ENCODE measurements at regions of chr6 and their contacts with region 1.

Region 1: DNA sequence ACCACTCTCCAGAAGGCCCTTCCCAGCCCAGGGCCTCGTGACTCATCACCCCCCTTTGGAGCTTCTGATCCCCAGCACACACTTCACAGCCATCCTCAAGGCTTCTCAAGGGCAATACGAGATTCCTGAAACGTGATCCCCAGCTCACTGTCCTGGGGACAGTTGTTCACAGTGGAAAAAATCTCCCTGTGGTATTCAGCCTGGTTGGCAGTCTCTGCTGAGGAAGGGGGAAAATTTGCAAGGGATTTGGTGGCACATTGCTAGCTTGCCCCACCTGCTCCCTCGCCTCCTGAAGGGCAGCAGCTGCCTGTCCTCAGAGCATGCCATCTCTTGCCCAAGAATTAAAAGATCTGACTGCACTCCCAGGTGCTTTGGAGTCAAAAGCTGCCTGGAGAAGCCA is 20.7 kb upstream of the PKHD1 start:
- DNase-seq: peak; percentile 25 to 74
- ATAC-seq: peak; percentile 82 to 90 (median 88)
- H3K4me3 ChIP-seq: peak overlapping the region; percentile 28
- H3K27ac ChIP-seq: peak overlapping the region; percentile 92
- H3K4me1 ChIP-seq: peaks cover 14% of the 10 kb centered on the region
- H3K27me3 ChIP-seq: no peaks in the 10 kb centered on the region
- CTCF ChIP-seq: no peak

Region 2: DNA sequence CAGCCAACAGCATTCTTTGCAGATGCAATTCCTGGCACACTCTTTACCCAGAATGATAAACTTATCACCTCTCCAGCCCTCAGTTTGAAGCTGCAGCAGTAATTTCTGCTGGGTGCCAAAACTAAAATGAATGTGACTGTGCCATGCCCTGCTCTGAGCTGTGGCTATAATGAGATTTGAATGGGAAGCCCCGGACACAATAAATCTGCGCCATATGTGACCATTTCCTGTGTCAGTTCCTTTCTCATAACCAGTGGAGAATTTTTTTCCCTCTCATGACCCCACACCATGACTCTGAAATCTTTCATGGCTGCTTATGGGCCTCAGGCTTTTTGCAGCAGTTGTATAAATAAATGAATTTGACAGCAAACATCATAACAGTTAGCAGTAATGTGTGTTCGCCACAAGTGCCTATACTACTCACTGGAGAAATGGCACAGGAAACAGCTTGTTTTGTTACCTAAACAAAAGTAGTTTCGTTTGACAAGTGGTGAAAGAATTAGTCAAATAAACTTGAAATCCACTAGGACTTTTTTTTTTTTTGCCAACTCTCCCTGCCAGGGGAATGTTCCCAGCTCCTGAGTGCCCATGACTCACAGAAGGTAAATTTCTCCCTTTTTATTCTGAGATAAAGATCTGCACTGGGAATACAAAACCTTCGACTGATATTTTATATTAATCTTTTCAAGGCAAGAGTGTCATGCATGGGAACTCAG is 429.1 kb before region 1 on chr6:
- intact Hi-C with region 1: no loop called
- DNase-seq: no peak
- ATAC-seq: no peak
- H3K4me3 ChIP-seq: no peak overlapping the region
- H3K27ac ChIP-seq: no peak overlapping the region
- H3K4me1 ChIP-seq: no peaks in the 10 kb centered on the region
- H3K27me3 ChIP-seq: no peaks in the 10 kb centered on the region
- CTCF ChIP-seq: no peak

Region 3: DNA sequence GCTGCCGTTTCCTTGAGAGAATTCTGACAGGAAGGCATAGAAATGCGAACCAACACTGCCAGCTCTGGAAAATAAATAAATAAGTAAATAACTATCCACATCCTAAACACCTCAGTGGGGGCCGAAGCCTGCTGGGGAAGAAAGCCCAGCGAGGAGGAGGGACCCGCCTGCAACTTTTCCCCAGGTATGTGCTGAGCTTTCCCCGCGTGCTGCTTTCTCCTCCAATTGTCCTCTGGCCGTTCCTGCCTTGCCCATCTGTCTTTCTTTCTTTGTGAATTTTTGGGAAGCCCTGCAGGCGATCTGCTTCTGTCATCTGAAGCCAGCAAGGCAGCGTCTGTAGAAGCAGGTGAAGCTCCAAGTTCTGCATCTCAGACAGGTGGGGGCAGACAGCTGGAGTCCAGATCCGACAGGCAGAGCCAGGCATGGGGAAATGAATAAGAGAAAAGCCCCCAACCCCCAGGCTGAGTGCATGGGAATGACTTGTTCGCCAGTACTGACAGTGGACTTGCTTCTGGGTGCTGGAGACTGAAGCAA is 28.9 kb after region 1 on chr6:
- intact Hi-C with region 1: loop called in 1 of 2 experiments (anchors 1 kb)
- DNase-seq: no peak
- ATAC-seq: peak in 3 of 4 donors; percentile 15 to 23 (median 21)
- H3K4me3 ChIP-seq: peak overlapping the region; percentile 80
- H3K27ac ChIP-seq: peak overlapping the region; percentile 81
- H3K4me1 ChIP-seq: peaks cover 2% of the 10 kb centered on the region
- H3K27me3 ChIP-seq: no peaks in the 10 kb centered on the region
- CTCF ChIP-seq: no peak

Measured in psoas muscle (tissue), 8 donors.